MCF 10A (cell line): ENCODE measurements at regions of chr4 and their contacts with region 1.

Region 1: GRCh38 chr4:118417325-118417724 is 64.5 kb upstream of the PRSS12 start:
- DNase-seq: peak; percentile 74
- H3K4me3 Mint-ChIP-seq: no peak overlapping the region
- H3K27ac Mint-ChIP-seq: peak overlapping the region; percentile 89
- H3K4me1 Mint-ChIP-seq: peaks cover 10% of the 10 kb centered on the region
- H3K27me3 Mint-ChIP-seq: no peaks in the 10 kb centered on the region
- CTCF ChIP-seq: no peak

Region 2: GRCh38 chr4:118278473-118279274 is 138.7 kb before region 1 on chr4:
- CTCF ChIA-PET with region 1: no interaction called
- POLR2A ChIA-PET with region 1: interaction called, 7 read pairs
- intact Hi-C with region 1: loop called (anchors 2 kb)
- DNase-seq: peak; percentile 98
- H3K4me3 Mint-ChIP-seq: peak overlapping the region; percentile 81
- H3K27ac Mint-ChIP-seq: peak overlapping the region; percentile 99
- H3K4me1 Mint-ChIP-seq: peaks cover 25% of the 10 kb centered on the region
- H3K27me3 Mint-ChIP-seq: no peaks in the 10 kb centered on the region
- CTCF ChIP-seq: no peak

Region 3: GRCh38 chr4:118398226-118399090 is 18.9 kb before region 1 on chr4:
- CTCF ChIA-PET with region 1: interaction called, 5 read pairs
- POLR2A ChIA-PET with region 1: interaction called, 19 read pairs
- intact Hi-C with region 1: no loop called
- DNase-seq: peak; percentile 6
- H3K4me3 Mint-ChIP-seq: no peak overlapping the region
- H3K27ac Mint-ChIP-seq: peak overlapping the region; percentile 99
- H3K4me1 Mint-ChIP-seq: peaks cover 28% of the 10 kb centered on the region
- H3K27me3 Mint-ChIP-seq: no peaks in the 10 kb centered on the region
- CTCF ChIP-seq: no peak